ENCODE measurements at regions of chr22 and their contacts with region 1.

Region 1: DNA sequence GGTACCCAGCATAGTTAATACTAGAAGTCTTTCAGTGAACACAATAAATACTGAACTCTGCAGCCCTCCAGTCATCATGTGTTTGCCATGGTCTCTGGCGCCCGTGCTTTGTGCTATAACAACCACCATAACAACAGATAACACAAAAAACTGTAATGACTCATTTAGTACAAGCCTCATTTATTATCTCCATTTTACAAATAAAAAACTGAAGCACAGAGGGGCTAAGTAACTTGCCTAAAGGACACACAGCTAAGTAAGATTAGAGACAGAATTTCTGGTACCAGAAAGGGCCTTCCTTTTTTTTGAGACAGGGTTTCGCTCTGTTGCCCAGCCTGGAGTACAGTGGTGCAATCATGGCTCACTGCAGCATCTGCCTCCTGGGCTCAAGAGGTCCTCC is 19.5 kb downstream of the RBFOX2 start:
- DNase-seq: no peak
- ATAC-seq: no peak
- H3K4me3 ChIP-seq: no peak overlapping the region
- H3K27ac ChIP-seq: no peak overlapping the region
- H3K4me1 ChIP-seq: peaks cover 14% of the 10 kb centered on the region
- H3K27me3 ChIP-seq: no peaks in the 10 kb centered on the region
- CTCF ChIP-seq: no peak

Region 2: GRCh38 chr22:35777335-35777975 is 231.6 kb before region 1 on chr22:
- intact Hi-C with region 1: no loop called
- DNase-seq: no peak
- ATAC-seq: no peak
- H3K4me3 ChIP-seq: no peak overlapping the region
- H3K27ac ChIP-seq: no peak overlapping the region
- H3K4me1 ChIP-seq: peaks cover 34% of the 10 kb centered on the region
- H3K27me3 ChIP-seq: no peaks in the 10 kb centered on the region
- CTCF ChIP-seq: no peak

Region 3: GRCh38 chr22:35971456-35972119 is 37.5 kb before region 1 on chr22:
- intact Hi-C with region 1: loop called in 1 of 2 experiments (anchors 5 kb)
- DNase-seq: no peak
- ATAC-seq: peak in 2 of 4 donors; percentile 41 to 55
- H3K4me3 ChIP-seq: no peak overlapping the region
- H3K27ac ChIP-seq: no peak overlapping the region
- H3K4me1 ChIP-seq: peaks cover 29% of the 10 kb centered on the region
- H3K27me3 ChIP-seq: no peaks in the 10 kb centered on the region
- CTCF ChIP-seq: no peak

Region 4: DNA sequence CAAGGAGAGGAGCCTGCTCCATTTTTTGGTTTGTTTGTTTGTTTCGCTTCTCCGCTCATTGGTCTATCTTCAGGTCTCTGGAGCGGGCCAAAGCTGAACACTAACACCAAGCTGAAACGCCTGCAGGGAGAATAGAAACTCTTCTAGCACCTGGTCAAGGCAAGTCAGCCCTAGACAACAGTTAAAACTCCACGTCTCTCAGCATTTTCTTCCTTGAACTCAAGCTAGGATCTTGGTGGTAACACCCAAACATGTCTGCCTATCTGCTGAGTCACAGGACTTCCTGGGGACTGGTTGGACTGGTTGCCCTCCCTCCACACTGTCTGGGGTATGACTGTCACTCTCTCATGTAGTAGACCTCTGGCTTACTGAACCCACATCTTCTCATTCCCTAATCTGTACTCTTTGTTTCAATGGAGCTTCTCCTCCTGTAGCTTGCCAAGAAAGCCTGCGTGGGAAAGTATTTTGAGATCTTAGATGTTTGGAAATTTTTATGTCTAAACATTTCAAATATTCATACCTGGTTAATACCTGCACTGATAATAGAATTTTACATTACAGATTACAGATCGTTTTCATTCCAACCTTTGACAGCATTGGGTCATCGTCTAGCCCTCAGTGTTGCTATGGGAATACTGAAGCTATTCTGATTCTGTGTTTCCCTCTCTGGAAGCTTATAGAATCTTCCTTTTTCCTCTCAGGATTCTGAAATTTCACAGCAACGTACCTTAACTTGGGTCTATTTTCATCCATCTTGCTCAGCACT is 43.6 kb after region 1 on chr22:
- intact Hi-C with region 1: no loop called
- DNase-seq: no peak
- ATAC-seq: no peak
- H3K4me3 ChIP-seq: no peak overlapping the region
- H3K27ac ChIP-seq: no peak overlapping the region
- H3K4me1 ChIP-seq: peaks cover 22% of the 10 kb centered on the region
- H3K27me3 ChIP-seq: no peaks in the 10 kb centered on the region
- CTCF ChIP-seq: no peak